PC-9 (cell line): ENCODE measurements at regions of chr4 and their contacts with region 1.

Region 1: GRCh38 chr4:41525129-41525528 is 12.8 kb upstream of the LIMCH1 start:
- DNase-seq: peak; percentile 66 to 97
- H3K4me3 ChIP-seq: no peak overlapping the region
- H3K27ac ChIP-seq: peak overlapping the region; percentile 97
- H3K4me1 ChIP-seq: peaks cover 42% of the 10 kb centered on the region
- H3K27me3 ChIP-seq: no peaks in the 10 kb centered on the region
- CTCF ChIP-seq: no peak

Region 2: DNA sequence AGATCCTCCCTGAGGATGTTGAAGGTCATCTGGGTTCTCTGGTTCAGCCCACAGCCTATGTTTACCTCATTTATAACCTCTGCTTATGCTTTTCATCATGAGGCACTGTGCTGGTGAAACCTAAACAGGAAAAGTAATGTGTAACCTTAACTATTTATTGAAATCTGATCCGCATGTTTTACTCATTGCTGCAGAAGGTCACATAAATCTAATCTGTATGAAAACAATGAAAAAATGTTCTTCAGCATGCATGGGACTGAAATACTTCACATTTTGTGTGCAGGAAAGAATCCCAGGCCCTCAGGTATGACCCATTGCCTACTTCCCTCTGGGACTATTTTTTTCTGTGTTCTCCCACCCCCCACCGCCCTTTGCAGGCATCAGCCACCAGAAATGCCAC is 238.1 kb before region 1 on chr4:
- CTCF ChIA-PET with region 1: no interaction called
- POLR2A ChIA-PET with region 1: no interaction called
- intact Hi-C with region 1: loop called (anchors 1 kb)
- DNase-seq: peak; percentile 44 to 96
- H3K4me3 ChIP-seq: no peak overlapping the region
- H3K27ac ChIP-seq: peak overlapping the region; percentile 89
- H3K4me1 ChIP-seq: peaks cover 40% of the 10 kb centered on the region
- H3K27me3 ChIP-seq: no peaks in the 10 kb centered on the region
- CTCF ChIP-seq: no peak

Region 3: DNA sequence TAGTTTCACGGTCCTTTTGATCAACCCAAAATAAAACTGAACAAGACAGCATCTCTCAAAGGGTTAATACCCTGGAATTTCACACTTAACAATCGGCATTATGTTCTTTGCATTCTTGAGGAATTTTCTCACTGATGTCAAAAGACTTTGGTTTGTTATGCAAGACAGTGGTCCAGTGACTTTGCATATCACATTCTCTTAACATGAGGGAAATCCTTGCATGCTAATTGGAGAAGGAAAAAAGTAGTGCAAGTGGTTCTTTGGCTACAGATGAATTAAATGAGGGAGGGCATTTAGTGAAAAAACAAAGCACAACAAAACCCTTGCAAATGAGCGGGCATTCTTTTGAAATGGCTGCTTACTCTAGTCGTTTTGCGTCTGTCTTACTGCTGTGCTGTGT is 92.2 kb before region 1 on chr4:
- CTCF ChIA-PET with region 1: interaction called, 5 read pairs
- POLR2A ChIA-PET with region 1: no interaction called
- intact Hi-C with region 1: loop called (anchors 2 kb)
- DNase-seq: peak; percentile 21 to 94
- H3K4me3 ChIP-seq: no peak overlapping the region
- H3K27ac ChIP-seq: peak overlapping the region; percentile 85
- H3K4me1 ChIP-seq: peaks cover 56% of the 10 kb centered on the region
- H3K27me3 ChIP-seq: no peaks in the 10 kb centered on the region
- CTCF ChIP-seq: no peak

Region 4: DNA sequence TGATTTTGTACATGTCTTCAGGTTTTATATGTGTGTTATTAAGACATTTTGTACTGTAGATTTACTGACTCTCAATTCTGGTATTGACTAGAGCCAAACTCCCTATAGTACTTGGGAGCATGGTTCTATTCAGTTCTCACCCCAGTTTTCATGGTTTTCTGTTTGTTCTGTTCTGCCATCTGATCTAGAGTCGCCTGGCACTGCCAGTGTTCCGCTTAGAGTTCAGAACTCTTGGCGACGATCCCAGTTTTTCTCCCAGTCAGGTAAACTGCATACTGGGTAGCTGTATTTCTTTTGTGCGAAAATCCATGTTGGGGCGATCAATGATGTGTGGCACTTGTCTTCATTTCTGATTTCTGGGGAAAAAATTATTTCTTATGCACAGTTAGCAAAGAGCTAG is 145.4 kb after region 1 on chr4:
- CTCF ChIA-PET with region 1: no interaction called
- POLR2A ChIA-PET with region 1: interaction called, 10 read pairs
- intact Hi-C with region 1: no loop called
- DNase-seq: no peak
- H3K4me3 ChIP-seq: no peak overlapping the region
- H3K27ac ChIP-seq: no peak overlapping the region
- H3K4me1 ChIP-seq: no peaks in the 10 kb centered on the region
- H3K27me3 ChIP-seq: no peaks in the 10 kb centered on the region
- CTCF ChIP-seq: no peak

Region 5: GRCh38 chr4:41913509-41913908 is 388.4 kb after region 1 on chr4:
- CTCF ChIA-PET with region 1: no interaction called
- POLR2A ChIA-PET with region 1: no interaction called
- intact Hi-C with region 1: no loop called
- DNase-seq: no peak
- H3K4me3 ChIP-seq: no peak overlapping the region
- H3K27ac ChIP-seq: peak overlapping the region; percentile 41
- H3K4me1 ChIP-seq: peaks cover 20% of the 10 kb centered on the region
- H3K27me3 ChIP-seq: no peaks in the 10 kb centered on the region
- CTCF ChIP-seq: no peak